Mammary epithelial cell (primary cell): ENCODE measurements at regions of chr16 and their contacts with region 1.

Region 1: GRCh38 chr16:69225121-69225520 is 38.2 kb downstream of the SNTB2 start:
- DNase-seq: no peak
- H3K4me3 ChIP-seq: no peak overlapping the region
- H3K27ac ChIP-seq: no peak overlapping the region
- H3K4me1 ChIP-seq: peaks cover 10% of the 10 kb centered on the region
- H3K27me3 ChIP-seq: no peaks in the 10 kb centered on the region
- CTCF ChIP-seq: no peak

Region 2: GRCh38 chr16:69186642-69187445 is 38.3 kb before region 1 on chr16 and contains the start of gene SNTB2:
- CTCF ChIA-PET with region 1: no interaction called
- dilution Hi-C with region 1: loop called (anchors 5 kb)
- in situ Hi-C with region 1: no loop called
- intact Hi-C with region 1: no loop called
- DNase-seq: peak; percentile 87
- H3K4me3 ChIP-seq: peak within 1 kb of the TSS; percentile 81 to 93 (median 85)
- H3K27ac ChIP-seq: peak within 1 kb of the TSS; percentile 65
- H3K4me1 ChIP-seq: peaks cover 43% of the 10 kb centered on the region
- H3K27me3 ChIP-seq: no peaks in the 10 kb centered on the region
- CTCF ChIP-seq: no peak
- total RNA-seq, gene SNTB2: 20.3 to 31.2 TPM

Region 3: DNA sequence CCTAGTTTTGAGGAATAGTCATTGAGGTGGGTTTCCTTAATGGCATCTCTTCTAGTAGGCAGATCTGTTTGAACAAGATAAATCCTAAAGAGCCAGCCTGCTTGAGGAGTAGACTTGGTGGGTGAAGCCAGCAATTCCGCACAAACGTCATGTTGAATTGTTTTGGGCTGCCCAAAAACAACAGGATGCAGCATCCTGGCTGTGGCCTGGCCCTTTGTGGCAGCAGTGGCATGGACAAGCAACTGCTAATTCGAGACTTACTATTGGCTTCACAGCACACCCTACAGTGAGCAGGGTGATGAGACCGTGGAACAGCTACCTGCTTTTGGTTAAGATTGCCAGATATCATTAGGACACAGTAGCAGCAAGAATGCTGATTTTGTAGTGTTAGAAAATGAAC is 76.7 kb after region 1 on chr16:
- CTCF ChIA-PET with region 1: no interaction called
- dilution Hi-C with region 1: loop called (anchors 5 kb)
- in situ Hi-C with region 1: no loop called
- intact Hi-C with region 1: no loop called
- DNase-seq: no peak
- H3K4me3 ChIP-seq: no peak overlapping the region
- H3K27ac ChIP-seq: no peak overlapping the region
- H3K4me1 ChIP-seq: no peaks in the 10 kb centered on the region
- H3K27me3 ChIP-seq: no peaks in the 10 kb centered on the region
- CTCF ChIP-seq: no peak

Region 4: DNA sequence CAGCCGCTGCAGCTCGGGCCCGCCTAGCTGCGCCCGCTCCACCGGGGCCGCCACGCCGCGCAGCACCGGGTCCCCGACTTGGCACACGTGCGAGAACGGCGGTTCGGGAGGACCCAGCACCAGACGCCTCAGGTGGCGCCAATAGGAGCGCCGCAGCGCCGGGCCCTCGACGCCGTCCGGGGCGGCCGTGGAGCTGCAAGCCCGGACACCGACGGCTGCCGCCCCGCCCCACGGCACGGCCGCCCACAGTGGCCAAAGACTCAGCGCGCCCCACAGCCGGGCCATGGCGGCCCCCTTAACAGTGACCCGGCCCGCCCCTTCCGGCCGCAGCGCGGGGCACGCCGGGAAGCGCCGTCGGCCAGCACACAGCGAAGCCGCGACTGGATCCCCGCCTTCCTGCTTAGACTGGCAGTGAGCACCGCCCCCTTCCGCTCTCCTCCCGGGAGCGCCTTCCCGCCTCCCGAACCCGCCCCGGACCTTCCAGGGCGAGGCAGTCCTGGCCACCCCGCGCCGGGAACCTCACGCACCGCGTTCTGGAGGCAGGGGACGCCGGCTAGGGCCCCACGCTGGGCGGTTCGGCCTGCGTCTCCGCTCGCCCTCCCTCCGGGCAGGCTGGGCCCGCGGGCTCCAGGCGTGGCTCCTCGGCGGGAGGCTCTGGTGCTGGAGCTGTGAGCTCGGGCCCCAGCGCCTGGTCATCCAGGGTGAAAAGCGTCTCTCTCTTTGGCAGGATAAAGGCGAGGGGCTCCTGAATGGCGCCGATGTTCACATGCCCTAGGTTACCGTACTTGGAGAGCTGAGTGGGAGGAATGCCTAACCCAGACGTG is 105.4 kb after region 1 on chr16 and contains the start of gene PDF:
- CTCF ChIA-PET with region 1: no interaction called
- dilution Hi-C with region 1: loop called (anchors 5 kb)
- in situ Hi-C with region 1: no loop called
- intact Hi-C with region 1: no loop called
- DNase-seq: peak; percentile 92
- H3K4me3 ChIP-seq: peak within 1 kb of the TSS; percentile 45 to 80 (median 79)
- H3K27ac ChIP-seq: peak within 1 kb of the TSS; percentile 58
- H3K4me1 ChIP-seq: peaks cover 28% of the 10 kb centered on the region
- H3K27me3 ChIP-seq: no peaks in the 10 kb centered on the region
- CTCF ChIP-seq: no peak
- total RNA-seq, gene PDF: 20.2 to 21.7 TPM